ENCODE measurements at regions of chr17 and their contacts with region 1.

Region 1: DNA sequence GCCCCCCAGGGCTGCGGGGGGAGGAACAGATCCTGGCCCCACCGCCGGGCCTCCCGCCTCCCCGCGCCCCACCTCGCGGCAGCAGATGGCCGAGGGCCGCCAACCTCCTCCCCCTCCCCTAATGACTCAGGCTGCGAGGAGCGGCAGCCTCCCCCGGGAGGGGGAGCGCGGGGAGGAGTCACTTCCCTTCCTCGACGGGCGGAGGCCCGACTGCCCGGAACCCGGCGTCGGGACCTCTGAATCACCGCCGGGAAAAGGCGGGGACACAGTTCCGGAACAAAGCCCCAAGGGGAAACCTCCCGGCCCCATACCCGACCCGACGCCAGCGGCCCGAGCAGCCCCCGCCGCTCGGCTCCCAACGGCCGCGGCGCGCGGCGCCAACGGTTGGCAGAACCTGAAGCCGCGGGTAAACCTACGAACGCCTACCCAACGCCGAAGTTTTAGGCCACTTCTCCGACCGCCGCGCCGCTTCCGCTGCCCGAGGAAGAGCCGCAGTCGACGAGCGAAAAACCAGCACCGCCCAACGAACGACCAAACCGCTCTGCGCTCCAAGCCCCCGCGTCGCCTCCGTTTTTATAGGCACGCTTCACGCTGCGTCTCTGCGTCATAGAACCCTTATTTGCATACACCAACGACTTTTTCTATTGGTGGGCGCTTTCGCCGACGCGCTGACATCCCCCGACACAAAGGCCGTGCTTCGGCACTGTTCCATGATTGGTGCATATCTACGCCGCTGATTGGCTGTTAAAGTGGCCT is 5.2 kb upstream of the UNK start:
- DNase-seq: peak; percentile 86 to 99 (median 95)
- ATAC-seq: peak; percentile 64
- H3K4me3 ChIP-seq: peak overlapping the region; percentile 79
- H3K4me3 Mint-ChIP-seq: peak overlapping the region; percentile 97
- H3K27ac ChIP-seq: peak overlapping the region; percentile 93 to 95
- H3K27ac Mint-ChIP-seq: peak overlapping the region; percentile 97
- H3K4me1 ChIP-seq: peaks cover 27% of the 10 kb centered on the region
- H3K4me1 Mint-ChIP-seq: peaks cover 60% of the 10 kb centered on the region
- H3K27me3 ChIP-seq: no peaks in the 10 kb centered on the region
- H3K27me3 Mint-ChIP-seq: peaks cover 5% of the 10 kb centered on the region
- CTCF ChIP-seq: no peak

Region 2: GRCh38 chr17:75557075-75557882 is 222.1 kb before region 1 on chr17:
- CTCF ChIA-PET with region 1: no interaction called
- POLR2A ChIA-PET with region 1: no interaction called
- intact Hi-C with region 1: no loop called
- DNase-seq: no peak
- ATAC-seq: no peak
- H3K4me3 ChIP-seq: no peak overlapping the region
- H3K4me3 Mint-ChIP-seq: no peak overlapping the region
- H3K27ac ChIP-seq: no peak overlapping the region
- H3K27ac Mint-ChIP-seq: no peak overlapping the region
- H3K4me1 ChIP-seq: no peaks in the 10 kb centered on the region
- H3K4me1 Mint-ChIP-seq: no peaks in the 10 kb centered on the region
- H3K27me3 ChIP-seq: no peaks in the 10 kb centered on the region
- H3K27me3 Mint-ChIP-seq: no peaks in the 10 kb centered on the region
- CTCF ChIP-seq: no peak

Region 3: GRCh38 chr17:75667021-75667790 is 112.2 kb before region 1 on chr17 and contains the starts of genes RECQL5 and SAP30BP:
- CTCF ChIA-PET with region 1: interaction called, 3 read pairs
- POLR2A ChIA-PET with region 1: interaction called, 18 read pairs
- intact Hi-C with region 1: no loop called
- DNase-seq: peak; percentile 97 to 99 (median 98)
- ATAC-seq: peak; percentile 100
- H3K4me3 ChIP-seq: peak within 1 kb of the TSS; percentile 76
- H3K4me3 Mint-ChIP-seq: peak within 1 kb of the TSS; percentile 72
- H3K27ac ChIP-seq: peak within 1 kb of the TSS; percentile 87 to 90
- H3K27ac Mint-ChIP-seq: peak within 1 kb of the TSS; percentile 57
- H3K4me1 ChIP-seq: peaks cover 23% of the 10 kb centered on the region
- H3K4me1 Mint-ChIP-seq: peaks cover 26% of the 10 kb centered on the region
- H3K27me3 ChIP-seq: no peaks in the 10 kb centered on the region
- H3K27me3 Mint-ChIP-seq: no peaks in the 10 kb centered on the region
- CTCF ChIP-seq: no peak
- total RNA-seq, gene RECQL5: 16.4 to 17.7 TPM
- total RNA-seq, gene SAP30BP: 209 to 227 TPM

Region 4: DNA sequence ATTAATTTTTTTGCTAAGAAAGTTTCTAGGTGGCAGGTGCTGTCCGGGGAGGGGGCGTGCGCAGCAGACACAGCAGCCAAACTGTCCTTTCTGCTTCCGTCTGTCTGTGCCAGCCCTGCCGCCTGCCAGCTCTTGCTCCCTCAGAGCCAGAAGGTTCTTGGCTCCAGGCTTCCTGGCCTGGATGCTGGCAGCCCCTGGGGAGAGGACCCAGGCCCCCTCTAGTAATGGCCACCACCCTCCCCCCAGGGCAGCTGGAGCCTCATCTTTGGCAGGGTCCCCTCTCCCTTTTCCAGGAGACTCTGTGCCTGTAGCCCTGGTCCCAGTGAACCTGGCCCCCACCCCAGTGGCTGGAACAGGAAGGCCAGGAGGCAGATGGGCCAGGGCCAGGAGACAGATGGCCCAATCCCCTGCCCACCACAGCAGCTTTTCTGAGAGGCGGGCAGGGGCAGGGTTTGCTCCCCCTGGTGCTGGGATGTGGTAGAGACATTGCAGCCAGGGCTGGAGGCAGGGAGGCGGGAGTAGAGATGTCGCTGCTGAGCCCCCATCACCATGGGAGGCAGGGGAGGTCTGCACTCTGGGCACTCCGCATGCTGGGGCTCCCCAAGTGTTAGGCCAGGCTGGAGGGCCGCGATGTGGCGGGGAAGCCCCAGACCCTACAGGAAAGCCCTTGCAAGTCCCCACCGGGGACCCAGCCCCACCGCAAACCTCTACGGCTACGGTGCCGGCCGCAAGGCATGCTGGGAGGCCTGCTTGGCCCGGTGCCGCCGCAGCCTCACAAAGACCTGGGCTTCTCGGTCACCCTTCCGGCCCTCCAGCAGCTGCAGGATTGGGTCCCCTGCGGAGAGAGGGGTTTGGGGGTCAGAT is 48.1 kb after region 1 on chr17:
- CTCF ChIA-PET with region 1: interaction called, 6 read pairs
- POLR2A ChIA-PET with region 1: interaction called, 36 read pairs
- intact Hi-C with region 1: loop called in 1 of 2 experiments (anchors 2 kb)
- DNase-seq: peak; percentile 30 to 85 (median 61)
- ATAC-seq: peak; percentile 76
- H3K4me3 ChIP-seq: peak overlapping the region; percentile 32
- H3K4me3 Mint-ChIP-seq: peak overlapping the region; percentile 34
- H3K27ac ChIP-seq: peak overlapping the region; percentile 39 to 46
- H3K27ac Mint-ChIP-seq: peak overlapping the region; percentile 86
- H3K4me1 ChIP-seq: peaks cover 46% of the 10 kb centered on the region
- H3K4me1 Mint-ChIP-seq: peaks cover 17% of the 10 kb centered on the region
- H3K27me3 ChIP-seq: no peaks in the 10 kb centered on the region
- H3K27me3 Mint-ChIP-seq: no peaks in the 10 kb centered on the region
- CTCF ChIP-seq: peak; percentile 84

Region 5: DNA sequence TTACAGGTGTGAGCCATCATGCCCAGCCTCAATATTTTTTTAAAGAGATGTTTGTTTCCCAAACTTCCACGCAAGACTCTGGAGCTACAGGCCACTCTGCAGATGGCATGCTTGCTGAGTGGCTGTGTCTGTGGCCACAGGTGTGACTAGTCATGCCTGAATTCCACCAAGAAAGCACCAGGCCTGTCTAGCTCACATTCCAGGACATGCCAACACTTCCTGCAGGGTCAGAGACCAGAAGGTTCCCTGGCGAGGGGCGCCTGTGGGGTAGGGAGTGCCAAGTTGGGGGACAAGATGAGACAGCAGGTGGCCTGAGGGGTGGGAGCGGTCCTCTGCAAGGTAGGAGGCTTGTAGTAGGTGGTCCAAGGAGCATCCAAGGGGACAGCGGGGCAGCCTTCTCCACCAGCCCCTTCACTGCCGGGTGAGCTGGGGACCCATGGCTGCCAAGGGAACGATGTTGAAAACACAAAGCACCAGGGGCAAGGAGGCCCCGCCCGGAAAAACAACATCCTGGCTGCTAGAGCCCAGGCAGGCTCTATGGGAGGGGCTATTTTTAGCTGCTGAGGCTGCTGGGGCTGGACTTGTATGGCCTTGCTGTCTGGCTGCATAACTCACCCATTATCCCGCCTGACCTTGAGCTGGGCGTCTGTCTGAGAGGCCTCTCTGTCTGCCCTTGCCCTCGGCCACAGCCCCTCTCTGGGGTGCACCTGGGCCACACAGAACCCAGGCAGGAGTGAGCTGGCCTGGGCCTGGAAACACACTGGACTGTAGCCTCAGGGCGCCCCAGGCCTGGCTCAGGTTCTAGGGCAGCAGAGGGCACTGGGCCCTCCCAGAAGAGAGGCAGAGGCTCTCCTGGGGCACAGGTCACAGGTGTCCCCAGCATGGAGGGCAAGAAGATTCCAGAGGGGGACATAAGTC is 93.3 kb after region 1 on chr17:
- CTCF ChIA-PET with region 1: no interaction called
- POLR2A ChIA-PET with region 1: interaction called, 26 read pairs
- intact Hi-C with region 1: no loop called
- DNase-seq: peak; percentile 56 to 87 (median 68)
- ATAC-seq: peak; percentile 65
- H3K4me3 ChIP-seq: no peak overlapping the region
- H3K4me3 Mint-ChIP-seq: peak overlapping the region; percentile 58
- H3K27ac ChIP-seq: peak overlapping the region; percentile 69 to 81
- H3K27ac Mint-ChIP-seq: peak overlapping the region; percentile 90
- H3K4me1 ChIP-seq: peaks cover 48% of the 10 kb centered on the region
- H3K4me1 Mint-ChIP-seq: peaks cover 47% of the 10 kb centered on the region
- H3K27me3 ChIP-seq: no peaks in the 10 kb centered on the region
- H3K27me3 Mint-ChIP-seq: no peaks in the 10 kb centered on the region
- CTCF ChIP-seq: no peak

Region 6: GRCh38 chr17:75896415-75897159 is 117.2 kb after region 1 on chr17 and contains the start of gene TRIM65:
- CTCF ChIA-PET with region 1: interaction called, 5 read pairs
- POLR2A ChIA-PET with region 1: interaction called, 21 read pairs
- intact Hi-C with region 1: loop called in 1 of 2 experiments (anchors 2 kb)
- DNase-seq: peak; percentile 55 to 91 (median 74)
- ATAC-seq: peak; percentile 85
- H3K4me3 ChIP-seq: peak within 1 kb of the TSS; percentile 57
- H3K4me3 Mint-ChIP-seq: peak within 1 kb of the TSS; percentile 88
- H3K27ac ChIP-seq: peak within 1 kb of the TSS in 1 of 2 donors; percentile 29
- H3K27ac Mint-ChIP-seq: peak within 1 kb of the TSS; percentile 78
- H3K4me1 ChIP-seq: peaks cover 33% of the 10 kb centered on the region
- H3K4me1 Mint-ChIP-seq: peaks cover 25% of the 10 kb centered on the region
- H3K27me3 ChIP-seq: no peaks in the 10 kb centered on the region
- H3K27me3 Mint-ChIP-seq: no peaks in the 10 kb centered on the region
- CTCF ChIP-seq: peak; percentile 33
- total RNA-seq, gene TRIM65: 9.9 to 11.7 TPM

Measured in CD4-positive, alpha-beta T cell (primary cell).